Mammary epithelial cell (primary cell): ENCODE measurements at regions of chrX and their contacts with region 1.

Region 1: DNA sequence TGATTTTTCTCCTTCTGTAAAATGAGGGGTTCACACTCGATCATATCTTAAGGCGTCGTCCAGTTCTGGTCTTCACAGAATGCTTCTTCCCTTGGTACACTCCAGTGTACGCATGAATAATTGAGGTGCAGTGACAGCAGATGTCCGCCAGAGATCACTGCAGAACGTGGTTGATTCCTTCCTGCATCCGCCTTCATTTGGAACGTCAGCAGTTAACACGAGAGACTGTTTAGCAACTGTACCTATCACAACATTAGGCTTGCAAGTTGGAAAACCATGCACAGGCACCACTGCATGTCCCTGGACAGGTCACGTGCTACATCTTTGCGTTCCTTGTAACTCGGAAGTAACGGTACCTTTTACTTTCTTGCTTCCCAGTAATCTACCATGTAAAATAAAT is 66.0 kb upstream of the GEMIN8 start:
- DNase-seq: peak; percentile 58
- H3K4me3 ChIP-seq: no peak overlapping the region
- H3K27ac ChIP-seq: no peak overlapping the region
- H3K4me1 ChIP-seq: no peaks in the 10 kb centered on the region
- H3K27me3 ChIP-seq: peaks cover 3% of the 10 kb centered on the region
- CTCF ChIP-seq: peak; percentile 89 to 93

Region 2: DNA sequence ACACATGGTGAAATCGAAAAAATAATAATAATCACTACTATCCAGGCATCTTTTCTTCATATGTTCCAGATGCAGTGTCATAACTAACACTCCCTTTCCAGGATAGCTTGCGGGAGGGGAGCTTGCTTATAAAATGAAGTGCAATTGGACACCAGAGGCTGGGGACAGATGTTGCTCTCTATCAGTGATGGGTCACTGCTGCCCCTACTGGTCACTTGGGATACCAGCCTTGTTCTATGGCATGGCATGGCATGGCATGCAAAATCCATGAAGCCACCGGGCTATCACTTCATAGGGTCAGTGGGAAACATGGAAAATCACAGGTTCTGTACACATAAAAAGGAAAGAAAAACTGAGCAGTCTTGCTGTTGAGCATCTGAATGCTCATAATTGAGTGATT is 601.7 kb after region 1 on chrX:
- CTCF ChIA-PET with region 1: no interaction called
- dilution Hi-C with region 1: no loop called
- in situ Hi-C with region 1: no loop called
- intact Hi-C with region 1: loop called (anchors 10 kb)
- DNase-seq: peak; percentile 21
- H3K4me3 ChIP-seq: no peak overlapping the region
- H3K27ac ChIP-seq: no peak overlapping the region
- H3K4me1 ChIP-seq: no peaks in the 10 kb centered on the region
- H3K27me3 ChIP-seq: no peaks in the 10 kb centered on the region
- CTCF ChIP-seq: peak; percentile 75 to 84

Region 3: DNA sequence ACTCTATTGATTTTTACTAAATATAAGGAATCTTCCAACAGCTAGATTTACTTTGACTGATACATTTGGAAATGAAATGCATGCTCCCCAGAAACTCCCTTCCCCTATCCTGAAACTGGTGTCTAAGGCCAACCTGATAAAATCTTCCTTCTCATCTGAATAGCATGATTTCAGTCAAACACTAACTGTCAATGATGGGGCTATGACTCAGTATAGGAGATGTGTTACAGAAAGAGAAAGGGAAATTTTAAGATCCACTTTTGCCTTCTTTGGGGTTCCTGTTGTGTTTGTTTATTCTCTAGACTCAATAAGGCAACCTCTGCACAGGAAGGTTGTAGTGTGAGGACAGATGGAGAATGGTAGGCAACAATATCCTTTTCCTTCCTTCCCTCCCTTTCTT is 938.2 kb after region 1 on chrX:
- CTCF ChIA-PET with region 1: interaction called, 13 read pairs
- dilution Hi-C with region 1: no loop called
- in situ Hi-C with region 1: no loop called
- intact Hi-C with region 1: no loop called
- DNase-seq: peak; percentile 6
- H3K4me3 ChIP-seq: no peak overlapping the region
- H3K27ac ChIP-seq: no peak overlapping the region
- H3K4me1 ChIP-seq: no peaks in the 10 kb centered on the region
- H3K27me3 ChIP-seq: no peaks in the 10 kb centered on the region
- CTCF ChIP-seq: no peak

Region 4: DNA sequence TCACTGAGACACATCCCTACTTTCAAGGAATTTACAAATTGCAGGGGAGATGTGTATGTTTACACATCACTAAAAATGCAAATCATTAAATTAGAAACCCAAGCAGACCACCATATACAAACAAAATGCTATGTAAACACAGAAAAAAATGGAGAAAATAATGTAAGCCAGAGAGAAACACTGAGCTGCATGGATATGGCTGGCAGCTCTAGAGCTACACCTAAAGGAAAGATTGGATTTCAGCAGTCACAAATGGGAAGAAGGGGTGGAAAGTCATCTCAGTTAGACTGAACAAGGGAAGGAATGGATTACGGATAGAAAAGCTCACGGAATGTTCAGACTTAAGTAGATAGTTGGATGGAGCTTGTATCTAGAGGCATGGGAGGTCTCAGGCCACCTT is 963.8 kb after region 1 on chrX:
- CTCF ChIA-PET with region 1: no interaction called
- dilution Hi-C with region 1: no loop called
- in situ Hi-C with region 1: no loop called
- intact Hi-C with region 1: loop called (anchors 10 kb)
- DNase-seq: no peak
- H3K4me3 ChIP-seq: no peak overlapping the region
- H3K27ac ChIP-seq: no peak overlapping the region
- H3K4me1 ChIP-seq: peaks cover 7% of the 10 kb centered on the region
- H3K27me3 ChIP-seq: no peaks in the 10 kb centered on the region
- CTCF ChIP-seq: no peak

Region 5: DNA sequence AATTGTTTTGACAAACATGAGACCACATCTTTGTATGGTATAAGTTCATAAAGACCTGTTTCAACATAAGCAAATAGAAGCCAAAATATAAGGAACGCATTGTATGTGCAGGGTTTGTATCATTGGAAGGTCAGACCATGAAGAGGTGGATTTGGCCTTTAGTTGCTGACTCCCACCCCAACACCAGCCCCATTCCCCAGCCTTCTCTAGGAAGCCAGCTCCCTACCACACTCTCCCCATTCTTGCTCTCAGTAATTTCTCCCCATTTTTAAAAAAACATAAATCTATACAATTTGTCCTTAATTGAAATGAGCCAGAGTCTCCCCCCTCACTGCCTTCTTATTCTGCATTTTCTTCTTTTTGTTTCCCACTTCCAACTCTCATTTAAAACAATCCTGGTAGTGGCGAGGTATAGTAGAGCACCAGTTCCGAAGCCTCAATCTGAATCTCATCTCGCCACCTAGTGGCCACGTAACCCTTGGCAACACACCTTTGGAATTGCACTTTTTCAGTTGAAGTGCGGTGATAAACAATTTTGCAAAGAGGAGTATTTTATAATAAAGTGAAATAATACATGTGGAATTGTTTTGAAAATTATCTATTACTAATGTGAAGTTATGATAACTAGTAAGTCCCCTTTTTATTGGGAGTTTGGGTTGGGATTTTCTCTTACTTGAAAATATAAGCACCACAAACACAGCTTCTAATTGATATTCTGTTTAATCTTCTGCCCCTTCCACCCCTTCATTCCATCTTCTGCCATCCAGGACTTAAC is 1047.5 kb after region 1 on chrX:
- CTCF ChIA-PET with region 1: no interaction called
- dilution Hi-C with region 1: no loop called
- in situ Hi-C with region 1: no loop called
- intact Hi-C with region 1: loop called (anchors 1 kb)
- DNase-seq: peak; percentile 34
- H3K4me3 ChIP-seq: no peak overlapping the region
- H3K27ac ChIP-seq: no peak overlapping the region
- H3K4me1 ChIP-seq: no peaks in the 10 kb centered on the region
- H3K27me3 ChIP-seq: no peaks in the 10 kb centered on the region
- CTCF ChIP-seq: peak; percentile 90 to 93